Activated CD8-positive, alpha-beta T cell treated with anti-CD3 and anti-CD28 coated beads, Interleukin-2, amount 10 ng/mL, durations not matched to agents 7 days and 5 days (primary cell): ENCODE measurements at regions of chr17 and their contacts with region 1.

Region 1: DNA sequence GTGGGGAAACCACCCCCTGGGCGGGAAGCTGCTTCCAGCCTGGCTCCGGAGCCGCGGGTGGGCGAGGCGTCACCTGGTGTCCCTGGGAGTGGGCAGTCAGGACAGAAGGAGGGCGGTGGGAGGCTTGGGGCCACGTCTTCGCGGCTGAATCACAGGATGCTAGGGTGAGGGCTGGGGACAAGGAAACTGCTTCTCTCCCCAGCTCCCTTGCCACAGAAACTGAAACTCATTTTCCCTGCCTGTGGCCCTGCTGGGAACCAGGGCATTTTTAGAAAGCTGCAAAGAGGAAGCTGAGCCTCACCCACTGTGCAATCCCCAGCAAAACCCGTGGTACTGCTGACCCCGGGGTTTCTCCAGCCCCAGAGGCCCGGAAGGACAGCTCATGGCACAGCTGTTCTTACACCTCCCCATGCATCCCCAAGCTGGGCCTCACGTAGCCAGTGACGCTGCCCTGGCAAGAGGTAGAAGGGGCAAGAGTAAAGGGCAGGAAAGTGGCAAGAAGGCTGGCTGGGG is 8.2 kb downstream of the RHBDF2 start:
- DNase-seq: peak; percentile 66
- ATAC-seq: peak; percentile 63
- H3K4me3 Mint-ChIP-seq: peak overlapping the region; percentile 73
- H3K27ac Mint-ChIP-seq: peak overlapping the region; percentile 97
- H3K4me1 Mint-ChIP-seq: peaks cover 83% of the 10 kb centered on the region
- H3K27me3 Mint-ChIP-seq: no peaks in the 10 kb centered on the region

Region 2: GRCh38 chr17:76467366-76467765 is 25.7 kb before region 1 on chr17 and contains the start of gene AANAT:
- CTCF ChIA-PET with region 1: interaction called, 184 read pairs
- POLR2A ChIA-PET with region 1: interaction called, 8 read pairs
- DNase-seq: no peak
- ATAC-seq: no peak
- H3K4me3 Mint-ChIP-seq: no peak within 1 kb of the TSS
- H3K27ac Mint-ChIP-seq: no peak within 1 kb of the TSS
- H3K4me1 Mint-ChIP-seq: peaks cover 9% of the 10 kb centered on the region
- H3K27me3 Mint-ChIP-seq: no peaks in the 10 kb centered on the region
- total RNA-seq, gene AANAT: not detected

Region 3: DNA sequence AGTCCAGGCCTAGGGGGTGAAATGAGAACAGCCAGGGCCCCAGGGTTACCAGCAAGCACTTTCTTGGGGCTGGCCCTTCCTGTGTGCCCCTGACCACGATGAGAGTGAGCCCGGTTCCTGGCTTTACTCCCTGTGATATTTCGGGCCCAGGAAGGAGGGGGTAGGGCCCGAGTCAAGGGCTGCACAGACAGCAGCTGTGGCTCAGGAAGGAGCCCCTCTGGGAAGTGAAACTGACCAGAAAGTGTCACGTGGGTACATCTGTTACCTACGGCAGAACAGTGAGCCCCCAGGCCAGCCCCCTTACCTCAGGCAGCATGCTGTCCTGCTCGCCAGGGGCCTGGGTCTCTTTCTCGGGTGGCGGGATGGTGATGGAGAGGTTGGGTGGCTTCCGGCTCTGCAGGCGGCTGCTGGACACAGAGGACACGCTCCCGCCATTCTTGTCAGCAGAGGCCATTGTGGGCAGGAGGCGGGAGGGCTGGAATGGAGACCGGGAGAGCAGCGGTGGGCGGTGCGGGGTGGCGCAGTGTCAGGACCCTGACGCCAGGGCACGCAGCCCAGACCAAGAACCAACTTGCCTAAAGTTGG is 11.9 kb before region 1 on chr17:
- CTCF ChIA-PET with region 1: interaction called, 7 read pairs
- POLR2A ChIA-PET with region 1: interaction called, 10 read pairs
- DNase-seq: no peak
- ATAC-seq: peak; percentile 54
- H3K4me3 Mint-ChIP-seq: peak overlapping the region; percentile 22
- H3K27ac Mint-ChIP-seq: peak overlapping the region; percentile 84
- H3K4me1 Mint-ChIP-seq: peaks cover 31% of the 10 kb centered on the region
- H3K27me3 Mint-ChIP-seq: no peaks in the 10 kb centered on the region

Region 4: DNA sequence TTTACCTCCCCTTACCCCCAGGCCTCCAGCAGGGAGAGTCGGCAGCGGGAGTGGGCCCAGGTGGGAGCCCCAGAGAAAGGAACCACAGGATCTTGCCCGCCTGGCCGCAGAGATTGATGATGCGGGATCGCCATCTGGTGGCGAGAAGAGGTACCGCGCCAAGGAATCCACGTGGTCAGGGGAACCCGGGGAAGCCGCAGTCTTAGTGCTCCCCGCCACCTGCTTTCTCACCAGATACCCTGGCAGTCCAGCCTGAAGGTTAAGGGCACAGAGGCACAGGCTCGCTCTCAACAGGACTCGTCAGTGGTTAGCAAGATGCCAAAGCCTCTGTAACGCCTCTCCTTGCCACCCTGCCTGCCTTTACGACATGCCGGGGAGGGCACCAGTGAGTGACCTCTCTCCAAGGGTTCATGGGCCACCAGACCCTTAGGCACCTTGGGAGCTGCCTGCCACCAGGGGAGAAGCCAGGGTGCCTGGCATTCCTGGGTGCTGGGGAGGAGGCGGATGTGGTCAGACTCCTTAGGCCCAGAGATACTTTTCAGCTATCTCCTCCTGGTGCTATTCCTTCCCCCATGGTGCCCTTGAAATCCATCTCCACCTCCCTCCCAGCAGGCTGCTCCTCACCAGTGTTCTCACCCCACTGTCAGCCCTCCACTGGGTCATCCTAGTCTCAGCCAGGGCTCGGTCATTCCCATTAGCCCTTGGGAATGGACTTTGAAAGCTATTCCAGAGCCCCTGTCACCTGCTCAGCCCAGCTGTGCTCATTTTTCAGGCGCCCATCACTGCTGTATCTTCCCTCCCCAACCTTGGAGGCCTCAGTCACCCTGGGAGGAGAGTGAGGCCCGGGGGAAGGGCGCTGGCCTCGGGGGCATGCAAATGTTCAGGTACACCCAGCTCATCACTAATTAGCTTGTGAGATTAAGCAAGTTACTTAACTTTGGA is 13.6 kb after region 1 on chr17:
- CTCF ChIA-PET with region 1: interaction called, 34 read pairs
- POLR2A ChIA-PET with region 1: interaction called, 12 read pairs
- DNase-seq: peak; percentile 91
- ATAC-seq: peak; percentile 85
- H3K4me3 Mint-ChIP-seq: no peak overlapping the region
- H3K27ac Mint-ChIP-seq: peak overlapping the region; percentile 49
- H3K4me1 Mint-ChIP-seq: peaks cover 43% of the 10 kb centered on the region
- H3K27me3 Mint-ChIP-seq: peaks cover 4% of the 10 kb centered on the region

Region 5: DNA sequence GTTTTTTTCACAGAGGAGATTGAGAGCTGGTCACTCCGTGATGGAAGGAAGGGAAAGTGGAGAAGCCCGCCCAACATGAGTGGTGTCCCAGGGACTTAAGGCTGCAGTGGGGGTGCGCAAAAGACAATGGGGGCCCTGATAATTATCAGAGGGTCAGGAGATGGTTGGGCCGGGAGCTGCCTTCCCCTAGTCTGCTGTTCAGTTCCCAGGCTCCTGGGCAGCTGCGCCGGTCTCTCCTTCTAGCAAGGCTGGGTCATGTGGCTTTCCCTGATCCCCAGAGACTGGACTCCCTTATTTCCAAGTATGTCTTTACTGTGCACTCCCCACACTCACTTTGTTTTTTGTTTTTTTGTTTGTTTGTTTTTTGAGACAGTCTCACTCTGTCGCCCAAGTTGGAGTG is 28.2 kb after region 1 on chr17:
- CTCF ChIA-PET with region 1: no interaction called
- POLR2A ChIA-PET with region 1: no interaction called
- DNase-seq: no peak
- ATAC-seq: no peak
- H3K4me3 Mint-ChIP-seq: no peak overlapping the region
- H3K27ac Mint-ChIP-seq: no peak overlapping the region
- H3K4me1 Mint-ChIP-seq: peaks cover 32% of the 10 kb centered on the region
- H3K27me3 Mint-ChIP-seq: no peaks in the 10 kb centered on the region